Stomach (tissue), 19 donors: ENCODE measurements at regions of chr5 and their contacts with region 1.

Region 1: GRCh38 chr5:56269216-56269927 is 36.2 kb upstream of the ANKRD55 start:
- DNase-seq: peak in 1 of 2 donors; percentile 79
- H3K4me3 ChIP-seq: no peak overlapping the region
- H3K27ac ChIP-seq: no peak overlapping the region
- H3K4me1 ChIP-seq: peaks cover 0 to 10% (median 5%) of the 10 kb centered on the region in 4 donors
- H3K27me3 ChIP-seq: no peaks in the 10 kb centered on the region
- CTCF ChIP-seq: peak in 2 of 7 experiments; percentile 17 to 37
- EP300 ChIP-seq: no peak
- POLR2A ChIP-seq: no peak

Region 2: DNA sequence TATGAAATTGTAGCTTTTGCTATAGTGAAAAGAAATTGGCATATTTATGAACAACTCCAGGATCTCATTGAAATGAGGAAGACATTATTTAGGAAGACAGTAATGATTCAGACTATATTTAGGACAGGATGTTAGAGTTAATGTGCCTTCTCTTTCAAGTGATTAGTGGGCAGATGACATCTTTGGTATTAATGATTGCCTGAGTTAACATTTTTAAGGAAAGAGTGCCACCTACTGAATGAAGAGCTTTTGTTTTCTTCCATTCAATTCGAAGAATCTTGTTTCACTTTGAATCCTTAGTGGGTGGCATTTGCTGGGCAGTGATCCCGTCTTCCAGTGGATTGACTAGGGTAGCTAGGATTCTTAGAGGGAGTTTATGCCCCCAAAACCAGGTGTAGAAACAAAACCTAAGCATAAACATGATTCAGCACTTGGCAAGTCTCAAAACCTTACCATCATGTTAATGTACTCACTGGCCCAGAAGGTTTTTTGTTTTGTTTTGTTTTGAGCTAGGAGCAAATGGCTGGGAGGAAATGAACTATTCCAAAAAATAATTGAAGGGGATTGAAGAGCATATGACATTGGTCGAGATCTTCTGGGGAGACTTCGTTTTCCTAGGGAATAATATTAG is 569.2 kb after region 1 on chr5:
- intact Hi-C with region 1: loop called (anchors 5 kb)
- DNase-seq: peak in 1 of 2 donors; percentile 76
- H3K4me3 ChIP-seq: peak overlapping the region in 1 of 4 donors; percentile 14
- H3K27ac ChIP-seq: peak overlapping the region in 3 of 5 donors; percentile 30 to 69 (median 36)
- H3K4me1 ChIP-seq: peaks cover 11 to 80% (median 48%) of the 10 kb centered on the region in 4 donors
- H3K27me3 ChIP-seq: no peaks in the 10 kb centered on the region
- CTCF ChIP-seq: peak in 5 of 7 experiments; percentile 12 to 59 (median 43)
- EP300 ChIP-seq: no peak
- POLR2A ChIP-seq: no peak